ENCODE measurements at regions of chr13 and their contacts with region 1.

Region 1: GRCh38 chr13:27977476-27978300 is 8.6 kb upstream of the CDX2 start:
- DNase-seq: peak; percentile 51
- ATAC-seq: no peak
- H3K4me3 ChIP-seq: no peak overlapping the region
- H3K27ac ChIP-seq: no peak overlapping the region
- H3K4me1 ChIP-seq: no peaks in the 10 kb centered on the region
- H3K27me3 ChIP-seq: peaks cover 98% of the 10 kb centered on the region
- CTCF ChIP-seq: no peak

Region 2: GRCh38 chr13:27374650-27375049 is 603.0 kb before region 1 on chr13:
- intact Hi-C with region 1: loop called (anchors 10 kb)
- DNase-seq: no peak
- ATAC-seq: peak; percentile 95
- H3K4me3 ChIP-seq: no peak overlapping the region
- H3K27ac ChIP-seq: no peak overlapping the region
- H3K4me1 ChIP-seq: peaks cover 3% of the 10 kb centered on the region
- H3K27me3 ChIP-seq: peaks cover 11% of the 10 kb centered on the region
- CTCF ChIP-seq: peak; percentile 80

Measured in upper lobe of right lung (tissue), 1 donor.